Posterior vena cava (tissue), 2 donors: ENCODE measurements at regions of chr3 and their contacts with region 1.

Region 1: DNA sequence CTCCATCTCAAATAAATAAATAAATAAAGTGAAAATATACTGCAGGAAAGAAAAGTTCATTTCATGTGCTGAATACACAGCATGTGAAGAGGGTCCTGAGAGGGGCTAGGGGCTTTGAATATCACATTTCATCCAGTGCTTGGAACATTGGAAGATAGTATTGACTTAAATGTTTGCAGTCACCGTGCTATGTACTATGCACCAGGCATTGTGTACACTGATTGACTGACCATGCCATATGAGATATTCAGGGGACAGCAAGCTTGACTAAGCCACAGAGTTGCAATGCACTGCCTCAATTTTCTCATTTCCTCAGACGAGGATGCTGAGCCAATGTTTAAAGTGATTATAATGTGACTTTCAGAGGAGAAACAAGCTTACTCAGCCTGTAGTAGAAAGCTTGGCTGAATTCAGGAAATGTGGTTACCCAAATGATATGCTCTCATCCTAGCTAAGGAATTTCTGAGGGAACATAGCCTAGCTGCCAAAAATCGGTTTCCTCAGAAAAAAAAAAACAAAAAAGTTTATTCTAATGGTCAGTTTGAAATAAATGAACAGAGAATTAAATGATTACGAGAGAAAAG is 557.9 kb downstream of the FGF12 start:
- DNase-seq: no peak

Region 2: DNA sequence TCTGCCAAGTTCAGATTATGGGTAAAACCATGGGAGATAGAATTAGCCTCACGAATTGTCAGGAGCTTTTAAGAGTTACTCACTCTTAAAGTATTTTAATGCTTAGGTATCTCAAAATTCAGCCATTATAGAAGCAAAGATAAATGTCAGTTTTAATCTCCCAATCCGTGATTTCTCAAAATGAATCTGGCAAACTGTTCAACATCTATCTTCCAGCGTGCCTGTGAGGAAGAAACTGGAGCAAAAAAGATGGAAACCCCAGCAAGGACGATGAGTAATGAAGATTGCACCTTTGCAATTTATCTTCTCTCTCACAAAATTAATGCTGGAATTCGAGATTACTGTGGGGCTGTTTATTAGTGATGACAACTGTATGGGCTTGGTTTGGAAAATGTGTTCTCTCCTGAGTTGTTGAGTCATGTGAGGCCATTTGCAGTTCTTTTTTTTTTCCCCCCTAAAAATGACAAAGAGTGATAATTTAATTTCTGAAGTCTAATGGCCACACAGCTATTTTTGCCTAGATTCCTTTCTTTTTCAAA is 637.9 kb before region 1 on chr3:
- intact Hi-C with region 1: loop called in 1 of 2 experiments (anchors 10 kb)
- DNase-seq: no peak